Naive thymus-derived CD4-positive, alpha-beta T cell (primary cell): ENCODE measurements at regions of chr5 and their contacts with region 1.

Region 1: DNA sequence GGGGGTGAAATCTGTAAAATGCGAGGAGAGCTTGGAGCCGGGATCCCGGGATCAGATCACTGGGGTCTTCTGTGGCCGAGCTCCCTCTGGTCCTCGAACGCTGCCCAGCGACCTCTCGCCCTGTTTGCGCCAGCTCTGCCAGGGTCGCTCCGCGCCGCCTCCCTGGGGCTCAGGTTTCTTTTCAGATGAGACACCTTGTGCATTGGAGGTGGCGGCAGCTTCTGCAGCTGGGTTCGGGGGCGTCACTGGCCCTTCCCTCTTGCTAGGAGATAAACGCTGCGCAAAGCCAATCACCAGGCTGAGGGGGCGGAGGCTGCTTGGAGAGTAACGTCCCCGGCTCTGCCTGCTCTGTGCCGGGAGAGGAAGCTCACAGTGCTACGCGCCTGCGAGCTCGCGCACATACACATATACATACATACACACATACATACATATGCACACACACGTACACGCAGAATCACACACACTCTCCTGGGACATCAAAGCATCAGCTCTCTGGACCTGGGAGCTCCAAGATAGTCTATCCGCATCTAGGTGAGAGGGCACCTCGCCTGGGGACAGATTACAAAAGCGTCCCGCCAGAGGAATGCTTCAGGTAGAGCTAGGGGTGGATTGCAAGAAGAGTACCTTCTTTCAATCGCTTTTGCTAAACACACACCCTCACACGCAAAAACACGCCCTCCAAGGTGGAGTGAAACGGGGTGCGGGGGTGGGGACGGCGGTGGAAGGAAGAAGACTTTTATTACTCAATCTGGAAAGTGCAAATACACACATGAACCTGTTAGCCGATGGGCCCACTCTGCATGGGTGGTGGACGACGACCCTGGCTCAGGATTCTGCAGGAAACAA is at the start of gene ST8SIA4:
- DNase-seq: peak; percentile 70 to 95 (median 87)
- ATAC-seq: peak; percentile 82
- H3K4me3 ChIP-seq: peak within 1 kb of the TSS; percentile 83
- H3K4me3 Mint-ChIP-seq: peak within 1 kb of the TSS; percentile 88 to 99 (median 96)
- H3K27ac ChIP-seq: peak within 1 kb of the TSS; percentile 89
- H3K27ac Mint-ChIP-seq: peak within 1 kb of the TSS; percentile 86 to 98 (median 94)
- H3K4me1 ChIP-seq: peaks cover 22 to 23% of the 10 kb centered on the region in 2 donors
- H3K4me1 Mint-ChIP-seq: peaks cover 32 to 51% (median 46%) of the 10 kb centered on the region in 7 donors
- H3K27me3 ChIP-seq: no peaks in the 10 kb centered on the region
- H3K27me3 Mint-ChIP-seq: no peaks in the 10 kb centered on the region
- total RNA-seq, gene ST8SIA4: 17.5 to 54.5 (median 23.4) TPM

Region 2: GRCh38 chr5:99032234-99033013 is 1870.8 kb before region 1 on chr5:
- CTCF ChIA-PET with region 1: interaction called, 4 read pairs
- POLR2A ChIA-PET with region 1: no interaction called
- intact Hi-C with region 1: loop called (anchors 5 to 10 kb)
- DNase-seq: peak in 3 of 9 donors; percentile 22 to 43 (median 38)
- ATAC-seq: peak; percentile 49
- H3K4me3 ChIP-seq: peak overlapping the region; percentile 43
- H3K4me3 Mint-ChIP-seq: peak overlapping the region; percentile 71 to 97 (median 88)
- H3K27ac ChIP-seq: peak overlapping the region; percentile 70
- H3K27ac Mint-ChIP-seq: peak overlapping the region; percentile 85 to 98 (median 96)
- H3K4me1 ChIP-seq: peaks cover 30 to 31% of the 10 kb centered on the region in 2 donors
- H3K4me1 Mint-ChIP-seq: peaks cover 32 to 87% (median 79%) of the 10 kb centered on the region in 7 donors
- H3K27me3 ChIP-seq: no peaks in the 10 kb centered on the region
- H3K27me3 Mint-ChIP-seq: no peaks in the 10 kb centered on the region

Region 3: GRCh38 chr5:100667161-100667630 is 236.1 kb before region 1 on chr5:
- CTCF ChIA-PET with region 1: no interaction called
- POLR2A ChIA-PET with region 1: interaction called, 3 read pairs
- intact Hi-C with region 1: loop called in 1 of 2 experiments (anchors 1 kb)
- DNase-seq: peak in 5 of 9 donors; percentile 4 to 42 (median 13)
- ATAC-seq: peak; percentile 80
- H3K4me3 ChIP-seq: no peak overlapping the region
- H3K4me3 Mint-ChIP-seq: peak overlapping the region in 1 of 10 donors; percentile 3
- H3K27ac ChIP-seq: no peak overlapping the region
- H3K27ac Mint-ChIP-seq: peak overlapping the region in 1 of 9 donors; percentile 4
- H3K4me1 ChIP-seq: peaks cover 3 to 14% of the 10 kb centered on the region in 2 donors
- H3K4me1 Mint-ChIP-seq: peaks cover 0 to 11% (median 7%) of the 10 kb centered on the region in 7 donors
- H3K27me3 ChIP-seq: no peaks in the 10 kb centered on the region
- H3K27me3 Mint-ChIP-seq: peaks cover 0 to 9% (median 0%) of the 10 kb centered on the region in 5 donors

Region 4: DNA sequence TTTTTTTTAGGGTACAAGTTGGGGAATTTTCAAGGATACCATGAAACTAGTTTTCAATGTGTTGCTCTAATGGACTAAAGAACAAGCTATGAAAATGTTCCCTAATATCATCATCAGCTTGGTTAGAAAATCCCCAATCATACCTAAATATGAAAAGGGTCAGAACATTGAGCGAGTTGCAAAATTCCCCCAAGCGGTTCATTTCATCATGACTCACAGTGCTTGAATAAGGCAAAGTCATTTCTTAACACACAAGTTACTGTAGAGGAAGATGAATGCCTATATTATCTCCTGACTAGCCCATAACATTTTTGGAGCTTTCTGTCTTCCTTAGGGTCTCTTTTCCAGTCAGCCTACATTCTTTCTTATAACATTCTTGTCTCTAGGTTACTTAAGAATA is 62.9 kb before region 1 on chr5:
- CTCF ChIA-PET with region 1: interaction called, 3 read pairs
- POLR2A ChIA-PET with region 1: interaction called, 4 read pairs
- intact Hi-C with region 1: loop called (anchors 1 to 2 kb)
- DNase-seq: peak in 1 of 9 donors; percentile 29
- ATAC-seq: peak; percentile 83
- H3K4me3 ChIP-seq: no peak overlapping the region
- H3K4me3 Mint-ChIP-seq: peak overlapping the region in 3 of 10 donors; percentile 8 to 69 (median 47)
- H3K27ac ChIP-seq: no peak overlapping the region
- H3K27ac Mint-ChIP-seq: peak overlapping the region in 4 of 9 donors; percentile 0 to 90 (median 54)
- H3K4me1 ChIP-seq: peaks cover 6 to 14% of the 10 kb centered on the region in 2 donors
- H3K4me1 Mint-ChIP-seq: peaks cover 21 to 67% (median 63%) of the 10 kb centered on the region in 7 donors
- H3K27me3 ChIP-seq: no peaks in the 10 kb centered on the region
- H3K27me3 Mint-ChIP-seq: no peaks in the 10 kb centered on the region

Region 5: GRCh38 chr5:100913298-100913697 is 10.0 kb after region 1 on chr5:
- CTCF ChIA-PET with region 1: no interaction called
- POLR2A ChIA-PET with region 1: interaction called, 4 read pairs
- intact Hi-C with region 1: loop called in 1 of 2 experiments (anchors 1 kb)
- DNase-seq: no peak
- ATAC-seq: no peak
- H3K4me3 ChIP-seq: no peak overlapping the region
- H3K4me3 Mint-ChIP-seq: no peak overlapping the region
- H3K27ac ChIP-seq: no peak overlapping the region
- H3K27ac Mint-ChIP-seq: no peak overlapping the region
- H3K4me1 ChIP-seq: no peaks in the 10 kb centered on the region
- H3K4me1 Mint-ChIP-seq: peaks cover 0 to 20% (median 0%) of the 10 kb centered on the region in 7 donors
- H3K27me3 ChIP-seq: no peaks in the 10 kb centered on the region
- H3K27me3 Mint-ChIP-seq: no peaks in the 10 kb centered on the region

Region 6: GRCh38 chr5:102296178-102296817 is 1393.0 kb after region 1 on chr5 and contains the start of gene SLCO4C1:
- CTCF ChIA-PET with region 1: no interaction called
- POLR2A ChIA-PET with region 1: no interaction called
- intact Hi-C with region 1: loop called in 1 of 2 experiments (anchors 10 kb)
- DNase-seq: peak; percentile 28 to 81 (median 53)
- ATAC-seq: peak; percentile 92
- H3K4me3 ChIP-seq: peak within 1 kb of the TSS; percentile 76
- H3K4me3 Mint-ChIP-seq: peak within 1 kb of the TSS; percentile 83 to 90 (median 88)
- H3K27ac ChIP-seq: peak within 1 kb of the TSS; percentile 20
- H3K27ac Mint-ChIP-seq: peak within 1 kb of the TSS; percentile 25 to 78 (median 62)
- H3K4me1 ChIP-seq: peaks cover 0 to 5% of the 10 kb centered on the region in 2 donors
- H3K4me1 Mint-ChIP-seq: peaks cover 12 to 28% (median 23%) of the 10 kb centered on the region in 7 donors
- H3K27me3 ChIP-seq: no peaks in the 10 kb centered on the region
- H3K27me3 Mint-ChIP-seq: peaks cover 0 to 13% (median 4%) of the 10 kb centered on the region in 5 donors
- total RNA-seq, gene SLCO4C1: 0.05 to 3.7 (median 0.56) TPM